ENCODE measurements at regions of chr6 and their contacts with region 1.

Region 1: DNA sequence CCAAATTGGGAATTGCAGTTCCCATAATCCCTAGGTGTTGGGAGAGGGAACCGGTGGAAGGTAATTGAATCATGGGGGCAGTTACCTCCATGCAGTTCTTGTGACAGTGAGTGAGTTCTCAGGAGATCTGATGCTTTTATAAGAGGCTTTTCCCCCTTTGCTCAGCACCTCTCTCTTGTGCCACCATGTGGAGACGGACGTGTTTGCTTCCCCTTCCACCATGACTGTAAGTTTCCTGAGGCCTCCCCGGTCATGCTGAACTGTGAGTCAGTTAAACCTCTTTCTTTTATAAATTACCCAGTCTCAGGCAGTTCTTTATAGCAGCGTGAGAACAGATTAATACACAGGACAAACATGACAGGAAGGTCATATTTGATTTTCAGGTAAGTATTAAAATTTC is 25.3 kb upstream of the HECA start:
- DNase-seq: peak in 1 of 4 experiments; percentile 49
- ATAC-seq: peak; percentile 83
- H3K4me3 ChIP-seq: no peak overlapping the region
- H3K27ac ChIP-seq: no peak overlapping the region
- H3K4me1 ChIP-seq: no peaks in the 10 kb centered on the region
- H3K27me3 ChIP-seq: peaks cover 0 to 4% of the 10 kb centered on the region in 2 experiments; a peak in 1 of 5 replicates
- CTCF ChIP-seq: peak; percentile 38 to 43 (median 41); a peak in 5 of 6 replicates
- EP300 ChIP-seq: no peak
- POLR2A ChIP-seq: no peak
- RAD21 ChIP-seq: peak; percentile 20 to 67; a peak in 3 of 4 replicates

Region 2: GRCh38 chr6:138817822-138818308 is 291.7 kb before region 1 on chr6:
- CTCF ChIA-PET with region 1: no interaction called
- POLR2A ChIA-PET with region 1: no interaction called
- in situ Hi-C with region 1: loop called (anchors 10 kb)
- intact Hi-C with region 1: loop called (anchors 1 kb)
- DNase-seq: peak in 1 of 4 experiments; percentile 11
- ATAC-seq: no peak
- H3K4me3 ChIP-seq: no peak overlapping the region
- H3K27ac ChIP-seq: no peak overlapping the region
- H3K4me1 ChIP-seq: no peaks in the 10 kb centered on the region
- H3K27me3 ChIP-seq: peaks cover 33 to 37% of the 10 kb centered on the region in 2 experiments
- CTCF ChIP-seq: no peak
- EP300 ChIP-seq: no peak
- POLR2A ChIP-seq: no peak
- RAD21 ChIP-seq: no peak

Region 3: GRCh38 chr6:139204978-139205377 is 95.4 kb after region 1 on chr6:
- CTCF ChIA-PET with region 1: no interaction called
- POLR2A ChIA-PET with region 1: no interaction called
- in situ Hi-C with region 1: no loop called
- intact Hi-C with region 1: no loop called
- DNase-seq: no peak
- ATAC-seq: no peak
- H3K4me3 ChIP-seq: no peak overlapping the region
- H3K27ac ChIP-seq: no peak overlapping the region
- H3K4me1 ChIP-seq: no peaks in the 10 kb centered on the region
- H3K27me3 ChIP-seq: no peaks in the 10 kb centered on the region
- CTCF ChIP-seq: no peak
- EP300 ChIP-seq: no peak
- POLR2A ChIP-seq: no peak
- RAD21 ChIP-seq: no peak

Measured in K562 (cell line).